IMR-90 (cell line): ENCODE measurements at regions of chr1 and their contacts with region 1.

Region 1: DNA sequence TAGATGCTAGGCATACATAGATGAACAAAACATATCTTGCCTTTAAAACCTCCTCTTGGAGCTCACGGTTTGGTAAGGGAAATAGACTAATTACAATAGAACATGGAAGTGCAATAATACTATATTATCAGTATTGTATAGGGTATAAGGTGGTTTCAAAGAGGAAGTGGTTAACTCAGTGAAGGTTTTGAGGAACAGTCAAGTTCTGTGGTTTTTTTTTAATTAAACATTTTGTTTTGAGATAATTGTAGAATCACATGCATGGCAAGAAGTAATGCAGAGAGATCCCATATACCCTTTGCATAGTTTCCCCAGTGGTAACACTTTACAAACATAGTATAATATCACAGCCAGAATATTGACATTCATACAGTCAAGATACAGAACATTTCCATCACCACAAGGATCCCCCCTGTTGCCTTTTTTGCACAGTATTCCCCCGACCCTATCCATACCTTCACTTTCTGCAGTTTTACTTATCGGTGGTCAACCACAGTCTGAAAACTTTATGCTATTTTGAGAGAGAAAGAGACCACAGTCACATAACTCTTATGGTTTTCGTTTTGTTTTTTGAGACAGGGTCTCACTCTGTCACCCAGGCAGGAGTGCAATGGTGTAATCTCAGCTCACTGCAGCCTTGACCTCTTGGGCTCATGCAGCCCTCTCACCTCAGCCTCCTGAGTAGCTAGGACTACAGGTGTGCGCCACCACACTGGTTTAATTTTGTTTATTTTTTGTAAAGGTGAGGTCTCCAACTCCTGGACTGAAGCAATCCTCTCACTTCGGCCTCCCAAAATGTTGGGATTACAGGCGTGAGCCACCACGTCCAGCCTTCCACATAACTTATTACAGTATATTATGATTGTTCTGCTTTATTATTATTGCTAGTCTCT is 60.5 kb upstream of the KIAA1614 start:
- DNase-seq: no peak
- ATAC-seq: no peak
- H3K4me3 ChIP-seq: no peak overlapping the region
- H3K27ac ChIP-seq: no peak overlapping the region
- H3K4me1 ChIP-seq: peaks cover 2% of the 10 kb centered on the region; the same call in 1 of the 2 replicates
- H3K27me3 ChIP-seq: no peaks in the 10 kb centered on the region
- CTCF ChIP-seq: no peak
- POLR2A ChIP-seq: no peak
- RAD21 ChIP-seq: no peak

Region 2: GRCh38 chr1:180623579-180624347 is 228.5 kb before region 1 on chr1:
- CTCF ChIA-PET with region 1: no interaction called
- POLR2A ChIA-PET with region 1: no interaction called
- dilution Hi-C with region 1: no loop called
- in situ Hi-C with region 1: loop called (anchors 10 kb)
- intact Hi-C with region 1: no loop called
- DNase-seq: peak; percentile 58
- ATAC-seq: peak; percentile 69; the same call in 1 of the 2 replicates
- H3K4me3 ChIP-seq: no peak overlapping the region
- H3K27ac ChIP-seq: no peak overlapping the region
- H3K4me1 ChIP-seq: peaks cover 2% of the 10 kb centered on the region; the same call in 1 of the 2 replicates
- H3K27me3 ChIP-seq: no peaks in the 10 kb centered on the region
- CTCF ChIP-seq: peak; percentile 51
- POLR2A ChIP-seq: no peak
- RAD21 ChIP-seq: peak; percentile 53

Region 3: DNA sequence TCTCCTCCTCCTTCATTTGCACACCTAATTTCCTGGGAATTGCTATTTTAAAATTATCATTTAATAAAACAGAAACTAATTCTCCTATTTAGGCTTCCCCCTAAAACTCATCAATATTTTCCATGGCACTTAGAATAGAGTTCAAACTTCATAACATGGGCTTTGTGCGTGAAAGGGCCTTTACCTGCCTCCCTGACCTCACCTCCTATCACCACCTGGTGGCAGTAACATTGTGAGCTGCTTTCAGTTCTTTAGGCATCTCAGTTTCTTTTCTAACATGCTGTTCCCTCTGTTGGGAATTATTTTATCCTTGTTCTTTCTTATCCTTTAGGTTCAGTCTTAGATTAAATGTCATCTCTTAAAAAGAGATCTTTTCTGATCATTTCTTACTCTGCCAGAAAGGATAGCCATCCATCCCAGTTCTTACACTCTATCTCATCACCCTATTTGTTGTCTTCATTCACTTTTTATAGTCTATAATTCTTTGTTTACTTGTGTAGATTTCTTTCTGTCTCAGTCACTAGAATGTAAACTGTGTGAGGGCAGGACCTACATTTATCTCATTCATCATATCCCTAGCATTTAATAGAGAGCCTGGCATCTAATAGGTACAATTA is 73.4 kb before region 1 on chr1:
- CTCF ChIA-PET with region 1: no interaction called
- POLR2A ChIA-PET with region 1: no interaction called
- dilution Hi-C with region 1: no loop called
- in situ Hi-C with region 1: no loop called
- intact Hi-C with region 1: no loop called
- DNase-seq: no peak
- ATAC-seq: no peak
- H3K4me3 ChIP-seq: no peak overlapping the region
- H3K27ac ChIP-seq: no peak overlapping the region
- H3K4me1 ChIP-seq: peaks cover 4% of the 10 kb centered on the region; the same call in 1 of the 2 replicates
- H3K27me3 ChIP-seq: no peaks in the 10 kb centered on the region
- CTCF ChIP-seq: peak; percentile 14; the same call in 1 of the 2 replicates
- POLR2A ChIP-seq: no peak
- RAD21 ChIP-seq: no peak

Region 4: GRCh38 chr1:180842052-180842451 is 10.2 kb before region 1 on chr1:
- CTCF ChIA-PET with region 1: no interaction called
- POLR2A ChIA-PET with region 1: no interaction called
- dilution Hi-C with region 1: no loop called
- in situ Hi-C with region 1: no loop called
- intact Hi-C with region 1: no loop called
- DNase-seq: peak; percentile 85
- ATAC-seq: peak; percentile 70
- H3K4me3 ChIP-seq: no peak overlapping the region
- H3K27ac ChIP-seq: no peak overlapping the region
- H3K4me1 ChIP-seq: peaks cover 3% of the 10 kb centered on the region
- H3K27me3 ChIP-seq: no peaks in the 10 kb centered on the region
- CTCF ChIP-seq: no peak
- POLR2A ChIP-seq: no peak
- RAD21 ChIP-seq: no peak

Region 5: GRCh38 chr1:180881806-180882509 is 29.7 kb after region 1 on chr1:
- CTCF ChIA-PET with region 1: no interaction called
- POLR2A ChIA-PET with region 1: no interaction called
- dilution Hi-C with region 1: no loop called
- in situ Hi-C with region 1: no loop called
- intact Hi-C with region 1: no loop called
- DNase-seq: peak; percentile 67
- ATAC-seq: peak; percentile 75
- H3K4me3 ChIP-seq: no peak overlapping the region
- H3K27ac ChIP-seq: no peak overlapping the region
- H3K4me1 ChIP-seq: peaks cover 4% of the 10 kb centered on the region
- H3K27me3 ChIP-seq: no peaks in the 10 kb centered on the region
- CTCF ChIP-seq: peak; percentile 70
- POLR2A ChIP-seq: no peak
- RAD21 ChIP-seq: peak; percentile 62

Region 6: GRCh38 chr1:182084487-182085316 is 1232.5 kb after region 1 on chr1:
- CTCF ChIA-PET with region 1: no interaction called
- POLR2A ChIA-PET with region 1: no interaction called
- dilution Hi-C with region 1: no loop called
- in situ Hi-C with region 1: no loop called
- intact Hi-C with region 1: no loop called
- DNase-seq: peak; percentile 50
- ATAC-seq: peak; percentile 95
- H3K4me3 ChIP-seq: no peak overlapping the region
- H3K27ac ChIP-seq: no peak overlapping the region
- H3K4me1 ChIP-seq: no peaks in the 10 kb centered on the region
- H3K27me3 ChIP-seq: no peaks in the 10 kb centered on the region
- CTCF ChIP-seq: peak; percentile 62
- POLR2A ChIP-seq: no peak
- RAD21 ChIP-seq: peak; percentile 74